A549 (cell line): ENCODE measurements at regions of chr10 and their contacts with region 1.

Region 1: GRCh38 chr10:4813023-4813422 is 13.0 kb upstream of the AKR1E2 start:
- DNase-seq: peak; percentile 85 to 91
- ATAC-seq: peak; percentile 85 to 95
- H3K4me3 ChIP-seq: no peak overlapping the region
- H3K27ac ChIP-seq: peak overlapping the region; percentile 79 to 83
- H3K4me1 ChIP-seq: peaks cover 54% of the 10 kb centered on the region
- CTCF ChIP-seq: no peak
- EP300 ChIP-seq: peak in 1 of 2 experiments; percentile 55; a peak in 2 of 5 replicates
- POLR2A ChIP-seq: no peak
- RAD21 ChIP-seq: peak in 1 of 2 experiments; percentile 16; a peak in 1 of 5 replicates

Region 2: DNA sequence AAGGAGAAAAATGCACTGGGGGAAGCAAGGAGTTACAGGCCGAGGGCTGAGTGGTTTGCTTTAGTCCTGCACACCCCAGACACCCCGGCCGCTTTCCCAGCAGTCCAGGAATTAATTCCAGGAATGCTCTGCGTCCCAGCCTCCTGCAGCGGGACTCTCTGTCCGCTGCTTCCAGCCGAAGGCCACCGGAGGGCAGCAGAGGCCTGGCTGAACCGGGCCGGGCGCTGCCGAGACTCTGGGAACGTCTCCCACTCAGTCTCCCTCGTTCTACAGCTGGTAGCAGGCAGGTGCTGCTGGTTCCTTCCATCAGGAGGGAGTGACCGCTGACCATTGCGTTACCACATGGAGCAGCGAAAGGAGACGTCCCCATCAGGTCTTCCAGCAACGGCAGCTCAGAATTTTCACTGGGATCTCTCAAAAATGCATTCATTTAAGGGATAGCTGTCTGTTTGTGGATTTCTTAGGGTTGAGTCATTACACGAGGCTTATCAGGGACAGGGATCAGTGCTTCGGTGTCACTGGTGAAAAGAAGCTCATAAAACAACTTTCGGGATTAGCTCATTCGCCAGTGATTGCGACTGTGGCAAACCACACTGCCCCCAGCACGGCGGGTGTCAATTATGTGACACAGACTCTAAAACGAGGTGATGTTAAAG is 1615.5 kb before region 1 on chr10:
- CTCF ChIA-PET with region 1: interaction called, 10 read pairs
- POLR2A ChIA-PET with region 1: no interaction called
- DNase-seq: peak; percentile 78 to 92
- ATAC-seq: peak; percentile 96 to 98
- H3K4me3 ChIP-seq: peak overlapping the region; percentile 28; the same call in 2 of the 3 replicates
- H3K27ac ChIP-seq: peak overlapping the region; percentile 66 to 80
- H3K4me1 ChIP-seq: peaks cover 18% of the 10 kb centered on the region
- CTCF ChIP-seq: peak; percentile 93
- EP300 ChIP-seq: no peak; a peak in 1 of 5 replicates
- POLR2A ChIP-seq: no peak
- RAD21 ChIP-seq: peak; percentile 96 to 99

Region 3: GRCh38 chr10:4825851-4826665 is 13.0 kb after region 1 on chr10 and contains the start of gene AKR1E2:
- CTCF ChIA-PET with region 1: interaction called, 46 read pairs
- POLR2A ChIA-PET with region 1: no interaction called
- DNase-seq: peak; percentile 98 to 99
- ATAC-seq: peak; percentile 96 to 98
- H3K4me3 ChIP-seq: peak within 1 kb of the TSS; percentile 77
- H3K27ac ChIP-seq: peak within 1 kb of the TSS; percentile 93 to 96
- H3K4me1 ChIP-seq: peaks cover 33% of the 10 kb centered on the region; the same call in 2 of the 3 replicates
- CTCF ChIP-seq: no peak
- EP300 ChIP-seq: no peak
- POLR2A ChIP-seq: peak; percentile 77
- RAD21 ChIP-seq: no peak
- polyA plus RNA-seq, gene AKR1E2: 17.5 and 20.0 TPM in 2 replicates

Region 4: GRCh38 chr10:4839401-4839800 is 26.4 kb after region 1 on chr10:
- CTCF ChIA-PET with region 1: interaction called, 41 read pairs
- POLR2A ChIA-PET with region 1: no interaction called
- DNase-seq: peak in 1 of 2 experiments; percentile 30
- ATAC-seq: peak; percentile 71 to 72; a peak in 4 of 6 replicates
- H3K4me3 ChIP-seq: no peak overlapping the region
- H3K27ac ChIP-seq: no peak overlapping the region
- H3K4me1 ChIP-seq: no peaks in the 10 kb centered on the region
- CTCF ChIP-seq: no peak
- EP300 ChIP-seq: no peak
- POLR2A ChIP-seq: no peak
- RAD21 ChIP-seq: no peak

Region 5: GRCh38 chr10:5094265-5095205 is 281.5 kb after region 1 on chr10 and contains the start of gene AKR1C3:
- CTCF ChIA-PET with region 1: interaction called, 16 read pairs
- POLR2A ChIA-PET with region 1: no interaction called
- DNase-seq: peak; percentile 61 to 94
- ATAC-seq: peak; percentile 78 to 86
- H3K4me3 ChIP-seq: peak within 1 kb of the TSS; percentile 87
- H3K27ac ChIP-seq: peak within 1 kb of the TSS; percentile 89 to 98
- H3K4me1 ChIP-seq: peaks cover 36% of the 10 kb centered on the region
- CTCF ChIP-seq: peak; percentile 66
- EP300 ChIP-seq: no peak
- POLR2A ChIP-seq: peak; percentile 53
- RAD21 ChIP-seq: peak; percentile 71
- polyA plus RNA-seq, gene AKR1C3: 3,820 and 4,867 TPM in 2 replicates

Region 6: DNA sequence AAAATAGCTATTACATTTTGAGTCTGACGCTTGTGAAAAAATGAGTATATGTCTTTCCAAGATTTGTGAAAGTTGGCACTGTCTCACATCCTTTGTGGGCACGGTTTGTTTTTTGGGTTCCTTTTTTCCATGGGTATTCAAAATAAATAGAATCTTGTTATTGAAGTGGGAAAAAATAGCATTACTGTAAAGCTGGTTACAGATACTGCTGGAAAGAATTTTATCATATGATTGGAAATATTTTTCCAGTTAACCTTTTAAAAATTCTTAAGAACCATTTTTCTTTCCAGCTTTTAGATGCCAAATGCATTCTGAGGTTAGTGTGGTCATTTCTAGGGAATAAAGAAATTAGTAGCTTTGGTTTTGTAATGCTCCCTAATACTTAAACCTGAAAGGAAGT is 610.7 kb after region 1 on chr10:
- CTCF ChIA-PET with region 1: interaction called, 15 read pairs
- POLR2A ChIA-PET with region 1: no interaction called
- DNase-seq: no peak
- ATAC-seq: no peak
- H3K4me3 ChIP-seq: no peak overlapping the region
- H3K27ac ChIP-seq: no peak overlapping the region
- H3K4me1 ChIP-seq: peaks cover 20% of the 10 kb centered on the region
- CTCF ChIP-seq: no peak
- EP300 ChIP-seq: no peak
- POLR2A ChIP-seq: no peak
- RAD21 ChIP-seq: no peak

Region 7: GRCh38 chr10:5441106-5441505 is 628.1 kb after region 1 on chr10:
- CTCF ChIA-PET with region 1: interaction called, 23 read pairs
- POLR2A ChIA-PET with region 1: no interaction called
- DNase-seq: no peak
- ATAC-seq: peak in 1 of 2 experiments; percentile 43; a peak in 2 of 6 replicates
- H3K4me3 ChIP-seq: no peak overlapping the region
- H3K27ac ChIP-seq: no peak overlapping the region
- H3K4me1 ChIP-seq: peaks cover 6% of the 10 kb centered on the region
- CTCF ChIP-seq: no peak
- EP300 ChIP-seq: no peak
- POLR2A ChIP-seq: no peak
- RAD21 ChIP-seq: no peak